Lower leg skin (tissue), 4 donors: ENCODE measurements at regions of chr6 and their contacts with region 1.

Region 1: DNA sequence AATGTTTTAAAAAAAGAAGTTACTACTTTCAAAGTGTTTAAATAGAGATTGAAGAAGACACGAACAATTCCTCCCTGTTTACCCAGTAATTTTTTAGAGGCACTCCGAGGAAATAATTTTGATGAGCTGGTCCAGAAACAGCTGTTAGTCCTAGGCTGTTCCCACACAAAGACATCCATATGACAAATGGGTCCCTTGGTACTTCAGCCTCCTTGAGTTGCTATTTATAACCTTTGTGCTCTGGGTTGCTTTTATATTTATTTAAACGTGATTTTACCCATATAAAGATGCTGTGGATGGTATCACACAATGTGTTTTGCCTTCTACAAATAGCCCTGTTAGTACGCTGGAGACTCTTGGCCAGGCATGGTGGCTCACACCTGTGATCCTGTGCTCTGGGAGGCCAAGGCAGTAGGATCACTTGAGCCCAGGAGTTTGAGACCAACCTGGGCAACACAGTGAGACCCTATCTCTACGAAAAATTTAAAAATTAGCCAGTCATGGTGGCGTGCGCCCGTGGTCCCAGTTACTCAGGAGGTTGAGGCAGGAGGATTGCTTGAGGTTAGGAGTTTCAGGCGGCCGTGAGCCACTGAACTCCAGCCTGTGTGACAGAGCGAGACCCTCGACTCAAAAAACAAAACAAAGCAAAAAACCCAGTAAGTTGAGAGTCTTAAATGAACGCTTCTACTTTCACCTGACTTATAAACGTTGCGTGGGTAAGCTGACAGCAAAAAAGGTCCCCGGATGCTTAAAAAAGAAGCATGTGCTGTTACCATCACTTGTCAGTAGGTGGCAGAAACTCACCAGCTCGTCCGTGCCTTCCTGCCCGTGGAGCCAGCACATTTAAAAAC is 56.9 kb upstream of the ARMH2 start:
- DNase-seq: peak; percentile 72 to 91
- H3K4me3 ChIP-seq: no peak overlapping the region
- CTCF ChIP-seq: peak in 1 of 3 donors; percentile 50
- POLR2A ChIP-seq: no peak

Region 2: GRCh38 chr6:25066593-25066992 is 211.0 kb after region 1 on chr6:
- intact Hi-C with region 1: loop called (anchors 5 kb)
- DNase-seq: no peak
- H3K4me3 ChIP-seq: no peak overlapping the region
- CTCF ChIP-seq: no peak
- POLR2A ChIP-seq: no peak